Posterior vena cava (tissue), 2 donors: ENCODE measurements at regions of chr5 and their contacts with region 1.

Region 1: DNA sequence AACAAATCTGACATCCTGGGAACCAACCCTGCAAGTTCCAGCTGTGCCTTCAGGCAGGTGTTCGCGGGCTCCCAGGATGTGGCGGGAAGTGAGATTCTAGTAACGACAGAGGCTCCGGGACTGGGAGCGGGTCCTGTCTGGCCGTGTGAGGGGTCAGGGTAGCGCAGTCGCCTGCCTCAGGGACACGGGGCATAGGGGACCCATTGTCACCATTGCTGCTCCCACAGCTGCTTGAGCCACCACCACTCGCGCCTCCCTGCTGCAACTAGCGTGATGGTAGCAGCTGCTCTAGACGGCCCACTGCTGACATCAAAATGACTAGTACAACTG is 468.5 kb downstream of the CDH9 start:
- DNase-seq: peak; percentile 78

Region 2: GRCh38 chr5:26535215-26535614 is 34.7 kb before region 1 on chr5:
- intact Hi-C with region 1: loop called in 1 of 2 experiments (anchors 2 kb)
- DNase-seq: no peak